GM23248 (cell line): ENCODE measurements at regions of chr7 and their contacts with region 1.

Region 1: DNA sequence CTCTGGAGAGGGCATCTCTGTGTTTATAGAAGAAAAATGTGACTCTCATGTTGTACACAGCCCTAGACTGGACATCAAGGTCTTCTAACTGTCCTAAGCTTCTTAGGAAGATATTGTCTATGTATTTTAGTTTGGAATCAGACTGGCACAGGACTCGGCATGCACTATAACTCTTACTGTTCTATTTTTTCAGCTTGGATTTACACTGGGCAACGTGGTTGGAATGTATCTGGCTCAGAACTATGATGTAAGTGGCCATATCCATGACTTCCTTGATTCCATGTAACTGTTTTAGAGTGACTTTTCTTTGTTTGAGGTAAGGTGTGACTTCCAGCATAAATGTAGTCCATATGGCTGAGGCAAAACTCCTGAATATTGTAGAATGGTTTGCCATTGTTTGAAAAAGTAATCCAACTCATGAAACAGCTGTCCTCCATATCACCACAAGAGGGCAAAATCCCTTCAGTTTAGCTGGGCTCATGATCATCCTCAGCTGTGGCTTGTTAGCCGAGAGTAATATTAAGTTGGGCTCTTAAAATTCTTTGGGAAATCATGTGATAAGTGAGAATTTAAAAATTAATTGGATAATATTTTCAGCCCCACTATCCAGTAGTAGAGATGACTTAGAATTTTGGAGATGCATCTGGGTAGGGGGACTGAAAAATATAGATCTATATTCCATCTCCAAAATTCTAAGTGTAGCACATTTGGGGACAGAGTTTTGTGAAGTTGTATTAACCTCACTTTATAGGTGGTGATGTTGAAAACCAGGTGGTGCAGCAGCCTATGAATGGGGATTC is 10.4 kb downstream of the STMP1 start:
- DNase-seq: peak; percentile 87
- H3K4me3 ChIP-seq: peak overlapping the region; percentile 15; the same call in 1 of the 2 replicates
- H3K27ac ChIP-seq: peak overlapping the region; percentile 47
- H3K4me1 ChIP-seq: peaks cover 46% of the 10 kb centered on the region
- H3K27me3 ChIP-seq: no peaks in the 10 kb centered on the region

Region 2: GRCh38 chr7:135782377-135782776 is 109.6 kb after region 1 on chr7:
- in situ Hi-C with region 1: no loop called
- DNase-seq: no peak
- H3K4me3 ChIP-seq: no peak overlapping the region
- H3K27ac ChIP-seq: no peak overlapping the region
- H3K4me1 ChIP-seq: no peaks in the 10 kb centered on the region
- H3K27me3 ChIP-seq: no peaks in the 10 kb centered on the region

Region 3: DNA sequence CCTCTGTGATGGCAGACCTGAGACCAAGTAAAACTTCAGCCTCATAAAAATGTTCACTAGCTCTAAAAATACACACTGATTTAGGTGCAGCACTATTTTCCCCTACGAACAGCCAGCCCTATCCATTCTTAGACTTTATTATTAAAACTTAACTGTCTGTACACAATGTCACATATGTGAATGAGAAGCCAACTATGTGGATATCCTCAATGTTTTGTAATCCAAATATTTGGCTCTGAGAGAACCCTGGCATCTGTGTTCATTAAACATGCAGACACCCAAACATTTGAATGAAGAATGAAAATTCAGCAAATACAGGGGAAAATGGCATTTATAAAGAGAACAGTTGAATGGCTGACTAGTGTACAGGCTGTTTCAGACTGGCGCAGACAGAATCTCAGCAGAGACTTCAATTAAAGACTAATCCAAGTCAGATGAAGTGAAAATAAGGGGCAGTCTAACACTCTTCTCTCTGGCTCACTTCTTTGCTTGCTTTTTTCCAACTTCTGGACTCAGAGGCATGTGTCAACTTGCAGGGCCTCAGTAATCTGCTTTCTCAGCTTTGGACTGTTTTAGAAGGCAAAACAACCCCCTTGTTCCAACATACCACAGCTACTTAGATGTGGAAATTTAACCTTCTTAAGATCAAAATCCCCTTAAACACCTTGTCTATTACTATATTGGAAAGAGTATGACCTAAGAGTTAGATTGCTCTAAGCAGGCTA is 123.2 kb after region 1 on chr7:
- in situ Hi-C with region 1: loop called (anchors 10 kb)
- DNase-seq: no peak
- H3K4me3 ChIP-seq: no peak overlapping the region
- H3K27ac ChIP-seq: no peak overlapping the region
- H3K4me1 ChIP-seq: peaks cover 9% of the 10 kb centered on the region
- H3K27me3 ChIP-seq: no peaks in the 10 kb centered on the region

Region 4: DNA sequence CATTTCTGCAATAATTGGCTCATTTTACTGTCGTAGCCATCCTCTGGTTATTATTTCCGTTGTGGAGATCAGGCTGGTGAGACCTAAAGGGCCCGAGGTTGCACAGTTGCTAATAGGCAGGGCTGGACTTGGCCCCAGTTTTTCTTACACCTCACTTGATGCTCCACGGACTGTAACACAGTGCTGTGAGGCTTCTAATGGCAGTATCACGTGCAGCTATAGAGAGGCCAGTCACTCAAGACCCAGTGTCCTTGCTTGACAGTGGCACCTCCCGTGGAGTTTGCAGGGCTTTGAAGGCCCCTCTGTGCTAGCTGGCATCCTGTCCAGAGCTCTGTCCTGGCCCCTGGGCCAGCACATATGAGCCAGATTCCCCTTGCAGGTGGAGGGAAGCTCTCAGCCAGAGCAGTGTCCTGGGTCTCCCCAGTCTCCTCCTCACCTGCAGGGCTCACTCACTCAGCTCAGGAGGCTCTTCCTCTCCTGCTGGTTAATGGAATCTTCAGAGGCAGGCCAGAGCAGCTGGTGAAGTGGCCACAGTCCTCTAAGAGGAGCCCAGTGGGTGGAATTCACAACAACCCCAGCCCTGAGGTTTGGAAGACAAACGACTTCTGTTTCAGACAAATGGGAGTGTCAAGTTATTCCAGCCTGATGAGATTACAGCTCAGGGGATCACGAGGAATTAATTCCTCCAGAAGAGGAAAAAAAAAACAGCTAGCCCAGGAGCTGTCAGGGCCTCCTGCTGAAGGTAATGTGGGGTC is 190.0 kb after region 1 on chr7:
- in situ Hi-C with region 1: no loop called
- DNase-seq: no peak
- H3K4me3 ChIP-seq: no peak overlapping the region
- H3K27ac ChIP-seq: no peak overlapping the region
- H3K4me1 ChIP-seq: no peaks in the 10 kb centered on the region
- H3K27me3 ChIP-seq: no peaks in the 10 kb centered on the region